ENCODE measurements at regions of chr2 and their contacts with region 1.

Region 1: GRCh38 chr2:74876081-74876886 is 42.4 kb downstream of the HK2 start:
- DNase-seq: peak; percentile 62
- ATAC-seq: peak; percentile 86
- H3K4me3 Mint-ChIP-seq: no peak overlapping the region
- H3K27ac Mint-ChIP-seq: peak overlapping the region; percentile 37
- H3K4me1 Mint-ChIP-seq: peaks cover 5% of the 10 kb centered on the region
- H3K27me3 Mint-ChIP-seq: no peaks in the 10 kb centered on the region

Region 2: DNA sequence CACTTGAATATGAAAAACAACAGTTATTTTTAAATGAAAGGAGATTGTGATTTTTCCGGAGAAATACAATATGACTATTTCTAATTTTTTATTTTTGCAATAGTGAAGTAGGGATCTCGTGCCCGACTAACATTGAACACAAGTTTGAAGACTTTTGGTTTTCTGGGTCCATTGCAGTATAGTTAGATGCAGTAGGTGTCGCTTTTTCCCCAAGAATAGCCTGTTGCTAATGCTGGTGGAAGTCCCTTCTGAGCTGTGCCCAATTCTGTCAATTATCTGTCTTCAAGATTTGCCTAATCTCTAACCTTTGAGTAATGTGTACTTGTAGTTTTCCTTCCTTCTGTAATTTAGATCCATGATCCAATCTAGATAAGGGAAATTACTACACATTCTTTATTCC is 185.7 kb before region 1 on chr2:
- CTCF ChIA-PET with region 1: interaction called, 18 read pairs
- POLR2A ChIA-PET with region 1: no interaction called
- DNase-seq: peak; percentile 50
- ATAC-seq: peak; percentile 61
- H3K4me3 Mint-ChIP-seq: no peak overlapping the region
- H3K27ac Mint-ChIP-seq: no peak overlapping the region
- H3K4me1 Mint-ChIP-seq: no peaks in the 10 kb centered on the region
- H3K27me3 Mint-ChIP-seq: peaks cover 11% of the 10 kb centered on the region

Region 3: GRCh38 chr2:74715078-74715791 is 161.0 kb before region 1 on chr2:
- CTCF ChIA-PET with region 1: interaction called, 104 read pairs
- POLR2A ChIA-PET with region 1: interaction called, 3 read pairs
- DNase-seq: peak; percentile 85
- ATAC-seq: peak; percentile 96
- H3K4me3 Mint-ChIP-seq: peak overlapping the region; percentile 75
- H3K27ac Mint-ChIP-seq: no peak overlapping the region
- H3K4me1 Mint-ChIP-seq: peaks cover 7% of the 10 kb centered on the region
- H3K27me3 Mint-ChIP-seq: peaks cover 21% of the 10 kb centered on the region

Region 4: DNA sequence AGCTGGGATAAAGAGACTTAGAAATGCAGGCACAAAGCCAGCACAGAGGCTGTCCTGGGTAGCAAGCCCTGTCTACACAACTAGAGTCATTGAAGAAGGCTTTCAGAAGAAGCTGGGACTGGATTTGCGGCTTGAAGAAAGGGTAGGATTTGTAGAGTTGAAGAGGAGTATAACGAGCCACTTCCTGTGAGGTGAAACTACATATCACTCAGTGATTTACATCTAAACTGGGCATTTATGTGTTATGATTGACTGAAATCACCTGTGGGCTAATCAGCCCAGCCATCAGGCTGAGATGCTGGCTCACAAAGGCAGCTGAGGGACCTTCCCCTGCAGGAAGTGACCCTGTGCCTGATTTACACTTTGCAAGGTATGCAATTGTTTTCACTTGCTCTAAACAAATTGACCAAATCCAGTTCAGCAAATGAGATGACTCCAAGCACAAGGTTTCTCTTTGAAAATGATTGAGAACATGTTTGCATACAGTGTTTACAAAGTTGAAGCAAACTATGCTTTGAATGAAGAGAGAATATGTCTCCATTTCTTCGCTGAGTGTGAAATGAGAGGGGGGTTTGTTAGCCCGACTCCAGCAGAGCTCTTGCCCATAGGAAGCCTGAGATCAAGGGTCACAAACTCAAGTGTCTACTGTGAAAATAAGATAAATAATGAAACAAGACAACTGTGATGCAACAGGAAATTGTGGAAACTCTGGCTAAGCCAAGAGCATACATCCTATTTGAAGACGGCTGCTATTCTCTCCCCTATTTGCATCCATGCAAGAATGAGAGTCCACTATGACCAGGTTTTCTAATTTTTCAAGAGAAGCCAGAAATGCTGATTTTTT is 111.6 kb before region 1 on chr2:
- CTCF ChIA-PET with region 1: interaction called, 12 read pairs
- POLR2A ChIA-PET with region 1: no interaction called
- DNase-seq: no peak
- ATAC-seq: no peak
- H3K4me3 Mint-ChIP-seq: no peak overlapping the region
- H3K27ac Mint-ChIP-seq: no peak overlapping the region
- H3K4me1 Mint-ChIP-seq: peaks cover 17% of the 10 kb centered on the region
- H3K27me3 Mint-ChIP-seq: peaks cover 6% of the 10 kb centered on the region

Measured in activated CD8-positive, alpha-beta T cell treated with anti-CD3 and anti-CD28 coated beads, Interleukin-2, amount 10 ng/mL, durations not matched to agents 7 days and 5 days (primary cell).